ENCODE measurements at regions of chr6 and their contacts with region 1.

Region 1: GRCh38 chr6:30102970-30103874 is 9.7 kb downstream of the TRIM31 start:
- DNase-seq: peak; percentile 85 to 97 (median 94)
- H3K4me3 ChIP-seq: peak overlapping the region in 3 of 4 donors; percentile 29 to 60 (median 31)
- H3K27ac ChIP-seq: peak overlapping the region in 3 of 5 donors; percentile 73 to 86 (median 81)
- H3K4me1 ChIP-seq: peaks cover 18 to 25% of the 10 kb centered on the region in 2 donors
- H3K27me3 ChIP-seq: no peaks in the 10 kb centered on the region
- CTCF ChIP-seq: peak; percentile 86 to 98 (median 96)
- POLR2A ChIP-seq: peak in 1 of 2 donors; percentile 62

Region 2: GRCh38 chr6:29665942-29666825 is 437.0 kb before region 1 on chr6:
- intact Hi-C with region 1: loop called in 1 of 2 experiments (anchors 5 kb)
- DNase-seq: no peak
- H3K4me3 ChIP-seq: no peak overlapping the region
- H3K27ac ChIP-seq: no peak overlapping the region
- H3K4me1 ChIP-seq: no peaks in the 10 kb centered on the region
- H3K27me3 ChIP-seq: peaks cover 21% of the 10 kb centered on the region
- CTCF ChIP-seq: no peak
- POLR2A ChIP-seq: no peak